ENCODE measurements at regions of chr7 and their contacts with region 1.

Region 1: DNA sequence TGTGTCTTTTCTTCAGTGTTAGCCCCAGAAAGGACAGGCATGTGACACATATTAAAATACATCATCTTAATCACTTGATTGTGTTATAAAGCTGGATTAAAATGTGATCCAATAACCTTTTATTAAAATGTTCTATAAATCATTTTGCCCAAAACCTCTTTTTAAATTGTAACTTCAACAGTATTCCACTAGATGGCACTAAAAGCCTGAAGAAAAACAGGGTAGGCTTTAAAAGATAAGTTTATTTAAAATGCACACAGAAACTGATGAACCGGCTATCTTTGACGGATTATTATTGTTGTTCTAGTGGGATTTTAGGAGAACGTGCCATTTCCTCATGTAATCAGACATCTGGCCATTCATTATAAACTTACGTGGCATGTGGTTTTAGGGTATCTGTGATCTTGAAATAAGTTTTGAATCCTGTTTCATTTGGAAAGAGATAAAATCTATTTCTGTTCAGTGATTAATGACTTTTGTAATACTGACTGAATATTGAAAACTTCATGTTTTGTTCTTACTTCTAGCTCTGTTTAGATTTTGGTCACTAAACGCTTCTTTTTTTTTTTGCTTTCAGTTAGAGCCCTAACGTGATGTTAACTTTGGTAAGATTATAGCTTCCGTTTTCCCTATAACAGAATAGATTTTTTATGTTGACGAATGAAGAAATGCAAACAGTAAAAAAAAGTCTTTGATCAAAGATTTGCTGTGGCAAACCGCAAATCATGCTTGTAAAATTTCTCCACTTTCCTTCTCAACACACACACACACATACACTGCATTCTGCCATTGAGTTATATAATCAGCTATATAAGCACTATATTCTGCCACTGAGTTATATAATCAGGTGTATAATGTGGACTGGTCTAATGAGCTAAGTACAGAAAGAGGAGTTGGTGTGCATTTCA is 13.6 kb downstream of the VPS50 start:
- DNase-seq: no peak
- H3K4me3 ChIP-seq: peak overlapping the region in 1 of 8 donors; percentile 46
- H3K27ac ChIP-seq: no peak overlapping the region
- H3K4me1 ChIP-seq: peaks cover 0 to 13% (median 0%) of the 10 kb centered on the region in 6 donors
- H3K27me3 ChIP-seq: no peaks in the 10 kb centered on the region
- CTCF ChIP-seq: peak in 10 of 11 experiments; percentile 25 to 68 (median 59)
- POLR2A ChIP-seq: no peak

Region 2: DNA sequence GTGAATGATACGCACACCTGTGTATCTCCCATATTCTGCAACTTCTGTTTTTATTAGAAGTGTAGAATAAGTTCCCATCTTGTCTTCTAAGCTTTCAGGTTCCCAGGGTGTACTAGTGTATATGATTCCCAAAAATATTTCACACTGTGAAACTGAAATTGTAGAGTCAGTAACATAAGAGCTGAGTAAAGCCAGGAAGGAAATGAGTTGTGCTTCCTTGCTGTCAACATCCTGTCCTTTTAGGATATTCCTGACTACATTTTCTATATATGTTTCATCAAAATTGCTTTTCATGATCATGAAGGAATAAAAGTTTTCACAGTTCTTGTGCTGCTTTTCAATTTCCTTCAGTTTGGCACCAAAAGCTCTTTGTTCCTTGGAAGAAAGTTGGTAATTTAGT is 112.8 kb before region 1 on chr7:
- intact Hi-C with region 1: no loop called
- DNase-seq: no peak
- H3K4me3 ChIP-seq: no peak overlapping the region
- H3K27ac ChIP-seq: no peak overlapping the region
- H3K4me1 ChIP-seq: no peaks in the 10 kb centered on the region
- H3K27me3 ChIP-seq: no peaks in the 10 kb centered on the region
- CTCF ChIP-seq: no peak
- POLR2A ChIP-seq: no peak

Region 3: GRCh38 chr7:93551063-93551904 is 305.5 kb after region 1 on chr7:
- intact Hi-C with region 1: loop called (anchors 10 kb)
- DNase-seq: no peak
- H3K4me3 ChIP-seq: no peak overlapping the region
- H3K27ac ChIP-seq: no peak overlapping the region
- H3K4me1 ChIP-seq: no peaks in the 10 kb centered on the region
- H3K27me3 ChIP-seq: no peaks in the 10 kb centered on the region
- CTCF ChIP-seq: peak in 9 of 11 experiments; percentile 7 to 55 (median 37)
- POLR2A ChIP-seq: no peak

Measured in spleen (tissue), 13 donors.